Lower lobe of right lung (tissue), 2 donors: ENCODE measurements at regions of chr6 and their contacts with region 1.

Region 1: DNA sequence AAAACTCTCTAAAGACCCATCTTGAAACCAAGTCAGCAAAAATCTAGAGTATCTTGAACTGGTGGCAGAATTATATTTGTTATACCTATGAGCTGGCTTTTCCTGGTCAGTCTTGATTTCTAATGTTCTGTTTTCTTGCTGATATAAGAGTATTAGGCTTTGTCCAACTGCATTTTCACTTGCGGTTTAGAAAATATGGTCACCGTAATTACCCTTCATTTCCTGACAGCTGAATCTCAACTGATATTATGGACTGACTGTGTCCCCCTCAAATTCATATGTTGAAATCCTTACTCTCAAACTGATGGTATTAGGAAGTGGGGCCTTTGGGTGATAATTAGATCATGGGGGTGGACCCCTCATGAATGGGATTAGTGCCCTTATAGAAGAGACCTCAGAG is 72.1 kb downstream of the TXLNB start:
- DNase-seq: no peak
- ATAC-seq: no peak
- H3K4me3 ChIP-seq: no peak overlapping the region
- H3K27ac ChIP-seq: peak overlapping the region; percentile 63
- H3K4me1 ChIP-seq: no peaks in the 10 kb centered on the region
- H3K27me3 ChIP-seq: no peaks in the 10 kb centered on the region
- CTCF ChIP-seq: no peak

Region 2: GRCh38 chr6:139091826-139092225 is 127.9 kb before region 1 on chr6:
- intact Hi-C with region 1: no loop called
- DNase-seq: no peak
- ATAC-seq: no peak
- H3K4me3 ChIP-seq: no peak overlapping the region
- H3K27ac ChIP-seq: no peak overlapping the region
- H3K4me1 ChIP-seq: no peaks in the 10 kb centered on the region
- H3K27me3 ChIP-seq: no peaks in the 10 kb centered on the region
- CTCF ChIP-seq: no peak

Region 3: DNA sequence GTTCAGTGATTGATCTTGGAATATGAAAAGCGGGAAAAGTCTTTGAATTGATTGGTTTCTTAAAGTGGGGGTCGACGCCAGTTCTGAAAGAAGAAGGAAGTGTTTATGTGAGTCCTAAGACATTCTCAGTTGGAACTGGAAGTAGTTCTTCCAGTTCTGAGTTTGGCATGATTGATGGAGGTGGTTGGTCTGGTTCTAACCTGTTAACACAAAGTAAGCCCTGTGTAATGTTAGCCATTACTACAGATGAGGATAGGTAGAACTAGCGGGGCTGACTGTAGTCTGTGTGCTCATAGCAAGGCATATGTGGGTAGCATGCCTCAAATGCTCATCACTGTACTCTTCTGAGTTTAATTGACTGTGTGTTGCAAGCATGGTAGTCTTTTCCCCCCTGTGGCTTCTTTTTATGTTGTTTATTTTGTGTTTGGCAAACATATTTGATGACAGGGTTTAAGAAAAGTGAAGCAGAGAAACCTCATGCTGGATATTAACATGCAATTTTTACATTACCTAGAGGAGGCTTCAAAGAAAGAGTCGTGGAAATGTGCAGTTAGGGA is 129.8 kb after region 1 on chr6:
- intact Hi-C with region 1: loop called (anchors 10 kb)
- DNase-seq: no peak
- ATAC-seq: no peak
- H3K4me3 ChIP-seq: no peak overlapping the region
- H3K27ac ChIP-seq: no peak overlapping the region
- H3K4me1 ChIP-seq: no peaks in the 10 kb centered on the region
- H3K27me3 ChIP-seq: no peaks in the 10 kb centered on the region
- CTCF ChIP-seq: no peak